HCT116 (cell line): ENCODE measurements at regions of chr20 and their contacts with region 1.

Region 1: GRCh38 chr20:56247948-56248782 is at the start of gene MC3R:
- DNase-seq: peak; percentile 35
- ATAC-seq: peak; percentile 95
- H3K4me3 ChIP-seq: no peak within 1 kb of the TSS
- H3K27ac ChIP-seq: no peak within 1 kb of the TSS
- H3K4me1 ChIP-seq: no peaks in the 10 kb centered on the region
- H3K27me3 ChIP-seq: no peaks in the 10 kb centered on the region; the same call in 1 of the 2 replicates
- CTCF ChIP-seq: peak; percentile 34 to 86 (median 81); a peak in 5 of 6 replicates
- POLR2A ChIP-seq: no peak
- RAD21 ChIP-seq: peak; percentile 64
- total RNA-seq, gene MC3R: not detected

Region 2: DNA sequence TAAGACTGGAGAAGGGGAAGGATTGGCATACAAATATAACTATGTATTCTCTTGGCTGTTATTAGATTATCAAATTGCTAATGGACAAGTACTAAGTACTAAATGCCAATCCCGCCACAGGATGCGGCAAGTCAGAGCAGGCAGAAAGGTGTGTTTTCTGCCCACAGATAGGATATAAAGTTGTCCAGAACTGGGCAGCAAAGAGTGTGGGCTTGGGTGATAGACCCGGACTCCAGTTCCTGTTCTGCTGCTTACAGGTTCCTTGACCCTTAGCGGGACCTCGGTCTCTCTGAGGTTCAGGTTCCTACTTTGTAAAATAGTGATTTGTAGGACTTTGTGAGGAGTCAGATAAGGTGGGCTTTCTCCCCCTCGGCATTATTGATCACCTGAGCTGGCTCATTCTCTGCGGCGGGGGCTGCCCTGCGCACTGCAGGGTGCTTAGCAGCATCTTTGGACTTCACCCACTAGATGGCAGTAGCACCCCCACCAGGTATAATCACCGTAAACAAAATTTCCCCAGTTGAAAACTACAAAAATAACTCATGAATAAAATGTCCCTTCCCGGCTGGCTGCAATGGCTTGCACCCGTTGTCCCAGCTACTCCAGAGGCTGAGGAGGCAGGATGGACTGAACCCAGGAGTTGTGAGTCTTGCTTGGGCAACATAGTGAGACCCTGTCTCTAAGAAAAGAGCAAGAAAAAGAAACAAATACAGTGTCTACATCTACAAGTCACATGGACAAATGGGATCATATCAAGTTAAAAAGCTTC is 1579.7 kb before region 1 on chr20:
- CTCF ChIA-PET with region 1: no interaction called
- POLR2A ChIA-PET with region 1: no interaction called
- RAD21 ChIA-PET with region 1: no interaction called
- intact Hi-C with region 1: loop called (anchors 5 kb)
- DNase-seq: no peak
- ATAC-seq: peak; percentile 95
- H3K4me3 ChIP-seq: peak overlapping the region in 1 of 2 experiments; percentile 24; a peak in 2 of 4 replicates
- H3K27ac ChIP-seq: no peak overlapping the region
- H3K4me1 ChIP-seq: peaks cover 0 to 7% of the 10 kb centered on the region in 2 experiments; a peak in 1 of 4 replicates
- H3K27me3 ChIP-seq: 0 out of 2 replicates have a peak, but pooled peaks cover 4% of the 10 kb centered on the region
- CTCF ChIP-seq: peak; percentile 21 to 84 (median 80); a peak in 4 of 6 replicates
- POLR2A ChIP-seq: no peak
- RAD21 ChIP-seq: peak; percentile 41; the same call in 1 of the 2 replicates

Region 3: GRCh38 chr20:54680872-54681619 is 1567.1 kb before region 1 on chr20:
- CTCF ChIA-PET with region 1: no interaction called
- POLR2A ChIA-PET with region 1: no interaction called
- RAD21 ChIA-PET with region 1: no interaction called
- intact Hi-C with region 1: loop called (anchors 1 kb)
- DNase-seq: peak; percentile 15
- ATAC-seq: no peak
- H3K4me3 ChIP-seq: no peak overlapping the region
- H3K27ac ChIP-seq: no peak overlapping the region
- H3K4me1 ChIP-seq: no peaks in the 10 kb centered on the region
- H3K27me3 ChIP-seq: no peaks in the 10 kb centered on the region
- CTCF ChIP-seq: peak; percentile 32 to 71 (median 49); a peak in 5 of 6 replicates
- POLR2A ChIP-seq: no peak
- RAD21 ChIP-seq: peak; percentile 61

Region 4: GRCh38 chr20:56574531-56575142 is 326.5 kb after region 1 on chr20:
- CTCF ChIA-PET with region 1: no interaction called
- POLR2A ChIA-PET with region 1: no interaction called
- RAD21 ChIA-PET with region 1: no interaction called
- intact Hi-C with region 1: loop called (anchors 2 kb)
- DNase-seq: no peak
- ATAC-seq: peak; percentile 51; the same call in 1 of the 2 replicates
- H3K4me3 ChIP-seq: no peak overlapping the region
- H3K27ac ChIP-seq: no peak overlapping the region
- H3K4me1 ChIP-seq: peaks cover 4 to 27% of the 10 kb centered on the region in 2 experiments; a peak in 2 of 4 replicates
- H3K27me3 ChIP-seq: no peaks in the 10 kb centered on the region
- CTCF ChIP-seq: no peak
- POLR2A ChIP-seq: no peak
- RAD21 ChIP-seq: no peak